PC-3 (cell line): ENCODE measurements at regions of chr22 and their contacts with region 1.

Region 1: GRCh38 chr22:32628628-32629572 is 154.3 kb downstream of the FBXO7 start:
- DNase-seq: no peak
- ATAC-seq: no peak
- H3K4me3 ChIP-seq: no peak overlapping the region
- H3K27ac ChIP-seq: no peak overlapping the region
- H3K4me1 ChIP-seq: no peaks in the 10 kb centered on the region
- H3K27me3 ChIP-seq: no peaks in the 10 kb centered on the region
- CTCF ChIP-seq: no peak

Region 2: DNA sequence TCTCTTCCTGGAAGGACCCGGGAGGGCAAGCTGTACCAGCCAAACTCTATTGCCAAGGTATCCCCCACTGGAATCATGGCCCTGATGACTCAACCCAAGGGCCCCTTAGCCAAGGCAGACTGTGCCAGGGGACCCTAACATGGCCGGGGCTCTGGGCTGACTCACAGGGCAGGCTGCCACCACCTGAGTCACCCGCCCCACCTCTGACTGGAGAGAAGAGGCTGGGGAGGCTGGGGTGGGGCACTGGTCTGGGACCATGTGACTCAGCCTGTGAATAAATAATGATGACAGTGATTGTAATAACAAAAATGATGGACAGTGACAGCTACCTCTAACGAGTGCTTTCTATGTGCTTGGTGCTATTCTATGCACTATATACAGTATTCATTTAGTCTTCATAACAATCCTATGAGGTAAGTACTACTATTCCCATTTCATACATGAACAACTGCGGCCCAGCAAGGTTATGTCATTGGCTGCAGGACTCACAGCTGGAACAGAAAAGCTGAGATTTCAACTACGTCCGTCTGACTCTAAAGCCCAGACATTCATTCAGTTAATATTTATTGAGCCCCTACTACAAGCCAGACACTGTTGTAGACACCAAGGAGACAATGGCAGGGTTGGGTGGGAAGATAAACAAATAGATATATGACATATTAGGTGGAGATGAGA is 70.1 kb before region 1 on chr22:
- CTCF ChIA-PET with region 1: no interaction called
- POLR2A ChIA-PET with region 1: interaction called, 24 read pairs
- intact Hi-C with region 1: no loop called
- DNase-seq: peak; percentile 84
- ATAC-seq: peak; percentile 99
- H3K4me3 ChIP-seq: no peak overlapping the region
- H3K27ac ChIP-seq: no peak overlapping the region
- H3K4me1 ChIP-seq: peaks cover 18% of the 10 kb centered on the region
- H3K27me3 ChIP-seq: no peaks in the 10 kb centered on the region
- CTCF ChIP-seq: no peak

Region 3: GRCh38 chr22:32644252-32645100 is 15.6 kb after region 1 on chr22:
- CTCF ChIA-PET with region 1: no interaction called
- POLR2A ChIA-PET with region 1: no interaction called
- intact Hi-C with region 1: no loop called
- DNase-seq: no peak
- ATAC-seq: no peak
- H3K4me3 ChIP-seq: no peak overlapping the region
- H3K27ac ChIP-seq: no peak overlapping the region
- H3K4me1 ChIP-seq: no peaks in the 10 kb centered on the region
- H3K27me3 ChIP-seq: no peaks in the 10 kb centered on the region
- CTCF ChIP-seq: no peak